Left cardiac atrium (tissue), 4 donors: ENCODE measurements at regions of chr12 and their contacts with region 1.

Region 1: GRCh38 chr12:124506145-124506831 is 61.1 kb downstream of the NCOR2 start:
- DNase-seq: peak; percentile 92
- ATAC-seq: peak; percentile 48 to 68

Region 2: GRCh38 chr12:123877968-123878367 is 628.3 kb before region 1 on chr12:
- intact Hi-C with region 1: no loop called
- DNase-seq: no peak
- ATAC-seq: no peak

Region 3: DNA sequence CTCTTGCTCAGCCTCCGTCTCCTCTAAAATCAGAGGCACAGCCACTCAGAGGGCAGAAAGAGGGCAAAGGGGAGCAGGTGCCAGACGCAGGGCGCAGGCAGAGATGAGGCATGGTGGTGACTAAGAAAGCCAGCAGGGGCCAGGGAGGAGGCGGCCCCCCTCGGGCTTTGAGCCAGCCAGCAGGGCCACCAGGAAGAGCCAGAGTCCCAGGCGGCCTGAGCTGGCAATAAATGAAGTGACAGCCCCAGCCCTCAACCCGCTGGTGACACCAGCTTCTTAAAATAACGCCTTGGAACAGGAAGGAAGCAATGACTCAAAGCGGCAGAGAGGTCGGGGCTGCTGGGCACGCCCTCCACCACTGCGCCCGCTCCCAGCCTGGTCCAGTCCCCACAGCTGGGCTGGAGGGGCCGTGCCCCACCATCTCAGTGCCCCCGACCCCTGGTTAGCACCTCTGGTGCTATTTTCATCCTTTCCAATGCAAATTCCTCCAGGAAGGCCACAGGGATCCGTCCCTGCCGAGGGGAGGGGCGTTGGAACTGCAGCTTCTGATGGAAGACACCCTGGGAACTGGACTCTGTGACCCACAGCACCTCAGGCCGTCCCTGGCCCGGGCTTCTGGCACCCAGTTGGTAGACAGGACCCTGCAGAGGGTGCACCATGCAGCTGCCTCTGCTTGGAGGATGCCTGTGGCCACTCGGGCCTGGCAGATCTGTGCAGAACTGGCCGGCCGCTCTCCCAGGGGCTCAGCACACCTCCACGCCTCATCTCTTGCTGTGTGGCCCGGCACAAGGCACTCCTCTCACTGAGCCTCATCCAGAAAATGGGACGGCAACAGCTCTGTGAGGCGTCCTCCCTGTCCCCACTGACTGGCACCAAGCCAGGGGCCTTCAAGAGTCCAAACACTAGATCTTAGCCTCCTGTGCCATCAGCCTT is 52.6 kb before region 1 on chr12:
- intact Hi-C with region 1: loop called in 1 of 2 experiments (anchors 10 kb)
- DNase-seq: peak; percentile 92
- ATAC-seq: peak; percentile 74 to 77

Region 4: GRCh38 chr12:124625867-124626675 is 119.8 kb after region 1 on chr12:
- intact Hi-C with region 1: no loop called
- DNase-seq: peak; percentile 94
- ATAC-seq: peak; percentile 87 to 93